A673 (cell line): ENCODE measurements at regions of chr11 and their contacts with region 1.

Region 1: GRCh38 chr11:33296695-33297094 is 39.5 kb downstream of the HIPK3 start:
- DNase-seq: no peak
- H3K4me3 ChIP-seq: no peak overlapping the region
- H3K27ac ChIP-seq: no peak overlapping the region
- H3K4me1 ChIP-seq: no peaks in the 10 kb centered on the region
- H3K27me3 ChIP-seq: no peaks in the 10 kb centered on the region
- CTCF ChIP-seq: no peak

Region 2: DNA sequence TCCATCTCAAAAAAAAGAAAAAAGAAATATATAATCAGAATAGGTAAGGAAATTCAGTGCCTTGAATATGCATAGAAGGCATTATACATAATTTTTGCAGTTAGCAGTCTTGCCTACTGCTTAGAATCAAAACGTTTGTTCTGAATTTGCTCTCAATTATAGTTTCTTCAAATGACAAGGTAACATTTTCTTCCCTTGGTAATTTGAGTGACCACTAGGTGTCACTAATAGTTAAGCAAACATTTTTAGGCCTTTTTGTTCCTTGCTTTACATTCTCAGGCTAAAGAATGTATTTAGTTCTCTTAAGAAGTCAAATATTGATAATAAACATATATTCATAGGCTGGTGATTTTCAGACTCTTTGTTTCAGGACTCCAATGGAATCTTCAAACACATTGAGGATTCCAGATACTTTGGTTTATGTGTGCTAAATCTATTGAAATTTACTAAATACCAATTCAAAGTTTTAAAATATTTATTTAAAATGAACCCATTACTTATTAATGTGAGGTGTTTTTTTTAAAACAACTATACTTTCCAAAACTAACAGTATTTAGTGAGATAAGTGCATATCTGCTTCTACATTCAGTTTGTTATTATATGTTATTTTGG is 336.0 kb before region 1 on chr11:
- CTCF ChIA-PET with region 1: no interaction called
- POLR2A ChIA-PET with region 1: interaction called, 15 read pairs
- intact Hi-C with region 1: no loop called
- DNase-seq: peak; percentile 87
- H3K4me3 ChIP-seq: no peak overlapping the region
- H3K27ac ChIP-seq: no peak overlapping the region
- H3K4me1 ChIP-seq: no peaks in the 10 kb centered on the region
- H3K27me3 ChIP-seq: no peaks in the 10 kb centered on the region
- CTCF ChIP-seq: peak; percentile 96